Activated naive CD4-positive, alpha-beta T cell treated with anti-CD3 and anti-CD28 coated beads for 36 hours (primary cell): ENCODE measurements at regions of chr10 and their contacts with region 1.

Region 1: DNA sequence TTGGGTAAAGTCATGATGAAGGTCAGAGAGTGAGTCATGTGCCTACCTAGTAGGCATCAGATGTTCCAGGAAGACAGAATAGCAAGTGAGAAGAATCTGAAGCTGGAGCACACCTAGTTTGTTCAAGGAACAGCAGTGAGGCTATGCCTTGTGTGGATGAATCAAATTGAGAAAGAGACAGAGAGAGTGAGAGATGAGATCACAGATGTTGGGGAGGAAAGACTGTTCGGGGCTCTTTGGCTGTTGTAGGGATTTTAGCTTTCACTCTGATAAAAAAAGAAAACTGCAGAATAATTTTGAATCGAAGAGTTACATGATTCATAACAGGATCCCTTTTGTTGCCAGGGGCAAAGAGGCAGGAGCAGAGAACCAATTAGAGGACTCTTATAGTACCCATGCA is 6.3 kb downstream of the LIPF start:
- DNase-seq: peak; percentile 44
- H3K4me3 Mint-ChIP-seq: no peak overlapping the region
- H3K27ac Mint-ChIP-seq: peak overlapping the region; percentile 33
- H3K4me1 Mint-ChIP-seq: peaks cover 24% of the 10 kb centered on the region
- H3K27me3 Mint-ChIP-seq: peaks cover 7% of the 10 kb centered on the region

Region 2: GRCh38 chr10:87817609-87818504 is 852.6 kb before region 1 on chr10 and contains the start of gene ATAD1:
- CTCF ChIA-PET with region 1: no interaction called
- intact Hi-C with region 1: loop called (anchors 5 kb)
- DNase-seq: peak; percentile 90
- H3K4me3 Mint-ChIP-seq: peak within 1 kb of the TSS; percentile 87
- H3K27ac Mint-ChIP-seq: peak within 1 kb of the TSS; percentile 94
- H3K4me1 Mint-ChIP-seq: peaks cover 28% of the 10 kb centered on the region
- H3K27me3 Mint-ChIP-seq: no peaks in the 10 kb centered on the region
- total RNA-seq, gene ATAD1: 47.4 to 53.7 TPM

Region 3: DNA sequence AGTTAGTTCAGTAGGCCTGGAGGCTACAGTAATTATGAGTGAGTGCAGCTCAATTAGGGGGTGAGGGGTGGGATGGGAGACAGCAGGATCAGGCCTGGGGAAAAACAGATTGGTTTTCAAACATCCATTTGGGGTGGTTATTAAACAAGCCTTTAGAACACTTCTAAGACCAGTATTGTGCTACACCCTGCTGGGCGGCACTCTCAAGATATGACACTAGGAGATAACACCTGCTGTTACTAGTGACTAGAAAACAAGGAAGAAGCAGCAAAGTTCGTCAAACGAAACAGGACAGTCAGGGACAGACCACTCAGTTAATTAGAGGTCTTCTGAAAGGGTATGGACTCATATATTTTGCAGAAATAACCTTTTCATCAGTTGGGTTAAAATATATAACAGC is 453.5 kb before region 1 on chr10:
- CTCF ChIA-PET with region 1: no interaction called
- intact Hi-C with region 1: no loop called
- DNase-seq: peak; percentile 7
- H3K4me3 Mint-ChIP-seq: no peak overlapping the region
- H3K27ac Mint-ChIP-seq: no peak overlapping the region
- H3K4me1 Mint-ChIP-seq: peaks cover 4% of the 10 kb centered on the region
- H3K27me3 Mint-ChIP-seq: no peaks in the 10 kb centered on the region

Region 4: GRCh38 chr10:88657901-88658300 is 12.6 kb before region 1 on chr10:
- CTCF ChIA-PET with region 1: no interaction called
- intact Hi-C with region 1: loop called (anchors 1 kb)
- DNase-seq: no peak
- H3K4me3 Mint-ChIP-seq: no peak overlapping the region
- H3K27ac Mint-ChIP-seq: no peak overlapping the region
- H3K4me1 Mint-ChIP-seq: no peaks in the 10 kb centered on the region
- H3K27me3 Mint-ChIP-seq: peaks cover 14% of the 10 kb centered on the region

Region 5: GRCh38 chr10:88715517-88715916 is 45.0 kb after region 1 on chr10:
- CTCF ChIA-PET with region 1: no interaction called
- intact Hi-C with region 1: no loop called
- DNase-seq: no peak
- H3K4me3 Mint-ChIP-seq: no peak overlapping the region
- H3K27ac Mint-ChIP-seq: no peak overlapping the region
- H3K4me1 Mint-ChIP-seq: no peaks in the 10 kb centered on the region
- H3K27me3 Mint-ChIP-seq: peaks cover 4% of the 10 kb centered on the region

Region 6: DNA sequence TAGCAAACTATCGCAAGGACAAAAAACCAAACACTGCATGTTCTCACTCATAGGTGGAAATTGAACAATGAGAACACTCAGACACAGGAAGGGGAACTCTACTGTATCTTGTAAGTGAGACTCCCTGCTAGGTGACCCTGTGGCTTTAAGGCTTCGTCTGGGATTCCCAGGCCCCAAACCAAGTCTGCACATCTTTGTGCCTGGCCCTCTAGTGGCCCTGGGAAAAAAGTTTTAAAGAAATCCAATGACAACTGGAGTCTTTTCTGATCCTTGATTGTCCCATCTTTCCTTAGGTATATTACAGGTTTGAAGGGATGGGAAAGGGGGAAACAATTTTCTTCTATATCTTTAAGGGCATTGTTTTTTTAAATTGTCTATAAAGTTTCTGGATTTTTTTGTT is 121.4 kb after region 1 on chr10:
- CTCF ChIA-PET with region 1: no interaction called
- intact Hi-C with region 1: loop called (anchors 1 kb)
- DNase-seq: peak; percentile 25
- H3K4me3 Mint-ChIP-seq: no peak overlapping the region
- H3K27ac Mint-ChIP-seq: no peak overlapping the region
- H3K4me1 Mint-ChIP-seq: peaks cover 19% of the 10 kb centered on the region
- H3K27me3 Mint-ChIP-seq: peaks cover 4% of the 10 kb centered on the region

Region 7: GRCh38 chr10:88848499-88848898 is 178.0 kb after region 1 on chr10:
- CTCF ChIA-PET with region 1: no interaction called
- intact Hi-C with region 1: loop called (anchors 1 kb)
- DNase-seq: no peak
- H3K4me3 Mint-ChIP-seq: no peak overlapping the region
- H3K27ac Mint-ChIP-seq: peak overlapping the region; percentile 25
- H3K4me1 Mint-ChIP-seq: peaks cover 13% of the 10 kb centered on the region
- H3K27me3 Mint-ChIP-seq: peaks cover 12% of the 10 kb centered on the region

Region 8: DNA sequence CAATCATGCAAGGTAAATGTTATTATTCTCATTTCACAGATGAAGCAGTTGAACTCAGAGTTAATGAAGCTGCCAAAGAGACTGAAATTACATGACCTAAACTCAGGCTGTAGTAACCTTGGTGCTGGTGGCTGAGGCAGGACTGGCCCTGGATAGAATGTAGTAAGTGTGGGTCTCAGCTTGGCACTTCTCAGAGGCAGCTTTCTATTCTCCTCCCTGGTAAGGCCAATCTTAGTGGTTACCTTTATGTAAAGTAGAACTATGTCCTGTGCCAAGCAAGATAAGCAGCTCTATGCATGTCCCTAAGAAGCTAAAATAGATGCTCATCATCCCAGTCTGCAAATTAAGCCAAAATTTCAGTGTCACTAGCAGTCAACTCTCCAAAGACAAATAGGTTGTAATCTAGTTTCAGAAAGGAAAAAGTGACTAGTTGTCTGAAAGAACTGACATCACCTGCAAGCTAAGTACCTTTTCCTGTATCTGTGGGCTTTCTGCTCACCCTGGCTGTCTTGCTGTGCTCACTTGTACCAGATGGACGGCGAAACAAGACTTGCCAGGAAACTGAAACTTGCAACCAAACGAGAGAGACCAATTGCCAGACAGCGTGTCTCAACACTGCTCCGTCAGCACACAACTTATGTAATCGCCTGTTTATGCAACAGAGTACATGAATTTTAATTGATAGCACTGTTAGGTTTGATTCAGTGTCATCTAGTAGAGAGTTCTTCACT is 492.9 kb after region 1 on chr10:
- CTCF ChIA-PET with region 1: no interaction called
- intact Hi-C with region 1: loop called (anchors 2 kb)
- DNase-seq: peak; percentile 69
- H3K4me3 Mint-ChIP-seq: peak overlapping the region; percentile 33
- H3K27ac Mint-ChIP-seq: peak overlapping the region; percentile 5
- H3K4me1 Mint-ChIP-seq: peaks cover 36% of the 10 kb centered on the region
- H3K27me3 Mint-ChIP-seq: peaks cover 7% of the 10 kb centered on the region